ENCODE measurements at regions of chr12 and their contacts with region 1.

Region 1: DNA sequence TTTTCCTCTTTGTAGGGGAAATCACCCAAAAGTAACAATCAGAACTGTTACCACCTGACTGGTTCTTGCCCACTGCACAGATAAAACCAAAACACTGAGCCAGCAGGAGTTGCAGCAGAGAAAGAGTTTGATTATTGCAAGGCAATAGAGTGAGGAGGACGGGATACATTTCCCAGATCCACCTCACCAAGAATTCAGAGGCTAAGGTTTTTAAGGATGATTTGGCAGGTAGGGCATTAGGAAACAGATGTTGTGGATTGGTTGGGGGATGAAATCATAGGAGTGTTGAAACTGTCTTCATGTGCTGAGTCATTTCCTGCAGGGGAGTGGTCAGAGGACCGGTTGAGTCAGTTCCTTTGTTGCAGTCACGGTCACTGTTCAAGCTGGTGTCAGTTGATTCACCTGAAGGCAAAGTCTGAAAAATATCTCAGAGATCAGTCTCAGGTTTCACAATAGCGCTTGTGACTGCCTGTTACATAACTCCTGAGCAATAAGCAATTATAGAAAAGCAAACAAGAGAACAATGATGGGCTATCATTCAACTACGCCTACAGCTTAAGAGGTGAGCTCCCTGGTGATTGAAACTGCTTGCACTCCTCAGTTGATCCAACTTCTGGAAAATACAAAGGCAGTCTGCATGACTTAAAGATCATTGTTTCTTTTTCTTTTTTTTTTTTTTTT is 20.3 kb upstream of the AMN1 start:
- DNase-seq: peak; percentile 67
- ATAC-seq: peak; percentile 70
- H3K4me3 ChIP-seq: peak overlapping the region in 2 of 5 experiments; percentile 1 to 26
- H3K4me3 Mint-ChIP-seq: peak overlapping the region; percentile 79
- H3K27ac ChIP-seq: peak overlapping the region; percentile 50 to 76
- H3K27ac Mint-ChIP-seq: peak overlapping the region; percentile 87
- H3K4me1 ChIP-seq: peaks cover 73 to 76% of the 10 kb centered on the region in 2 donors
- H3K4me1 Mint-ChIP-seq: peaks cover 72% of the 10 kb centered on the region
- H3K27me3 ChIP-seq: no peaks in the 10 kb centered on the region
- H3K27me3 Mint-ChIP-seq: no peaks in the 10 kb centered on the region
- CTCF ChIP-seq: no peak

Region 2: DNA sequence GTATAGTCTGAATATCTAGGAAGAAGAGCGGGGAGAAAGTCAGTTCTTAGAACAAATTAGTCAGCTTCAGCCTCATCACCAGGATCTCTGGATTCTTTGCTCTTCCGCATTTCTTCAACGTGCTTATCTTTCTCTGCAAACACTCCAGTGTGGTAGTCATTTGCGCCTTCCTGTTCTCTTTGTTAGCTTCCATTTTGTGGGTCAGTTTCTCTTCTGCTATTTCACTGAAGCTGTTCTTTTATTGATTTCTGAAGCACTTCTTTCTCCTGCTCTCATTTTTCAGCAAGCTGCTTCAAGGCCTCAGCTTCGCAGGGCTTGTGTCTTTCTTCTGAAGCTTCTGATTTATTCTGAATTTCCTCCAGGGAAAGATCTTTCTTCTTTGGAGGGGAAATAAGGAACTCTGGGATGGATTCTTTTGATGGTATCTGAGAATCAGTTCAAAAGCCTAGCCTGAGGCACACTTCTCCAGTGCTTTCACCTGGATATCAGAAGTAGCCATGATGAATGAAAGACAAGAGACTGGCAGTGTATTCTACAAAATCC is 33.8 kb before region 1 on chr12:
- CTCF ChIA-PET with region 1: no interaction called
- POLR2A ChIA-PET with region 1: interaction called, 6 read pairs
- intact Hi-C with region 1: loop called (anchors 1 kb)
- DNase-seq: peak; percentile 83
- ATAC-seq: peak; percentile 96
- H3K4me3 ChIP-seq: peak overlapping the region; percentile 32 to 60 (median 53)
- H3K4me3 Mint-ChIP-seq: peak overlapping the region; percentile 51
- H3K27ac ChIP-seq: peak overlapping the region; percentile 88 to 90
- H3K27ac Mint-ChIP-seq: peak overlapping the region; percentile 87
- H3K4me1 ChIP-seq: peaks cover 32 to 37% of the 10 kb centered on the region in 2 donors
- H3K4me1 Mint-ChIP-seq: peaks cover 54% of the 10 kb centered on the region
- H3K27me3 ChIP-seq: no peaks in the 10 kb centered on the region
- H3K27me3 Mint-ChIP-seq: no peaks in the 10 kb centered on the region
- CTCF ChIP-seq: no peak

Region 3: DNA sequence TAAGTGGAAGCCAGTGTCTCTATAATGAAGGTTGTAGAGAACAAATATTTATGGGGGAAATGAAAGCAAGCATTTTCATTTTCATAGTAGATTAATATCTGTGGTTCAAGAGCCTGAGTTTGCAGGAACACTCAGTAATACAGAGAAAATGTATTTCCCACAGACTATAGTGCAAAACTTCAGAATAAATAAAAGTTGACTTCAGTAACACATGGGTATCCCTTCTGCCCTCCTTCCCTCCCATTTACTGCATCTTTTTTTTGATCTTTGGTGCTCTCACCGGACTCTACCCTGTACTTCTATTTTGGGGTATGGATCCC is 55.0 kb after region 1 on chr12:
- CTCF ChIA-PET with region 1: interaction called, 4 read pairs
- POLR2A ChIA-PET with region 1: interaction called, 4 read pairs
- intact Hi-C with region 1: loop called (anchors 1 kb)
- DNase-seq: no peak
- ATAC-seq: no peak
- H3K4me3 ChIP-seq: peak overlapping the region in 1 of 5 experiments; percentile 21
- H3K4me3 Mint-ChIP-seq: peak overlapping the region; percentile 85
- H3K27ac ChIP-seq: peak overlapping the region in 1 of 2 donors; percentile 54
- H3K27ac Mint-ChIP-seq: peak overlapping the region; percentile 90
- H3K4me1 ChIP-seq: peaks cover 21 to 43% of the 10 kb centered on the region in 2 donors
- H3K4me1 Mint-ChIP-seq: peaks cover 51% of the 10 kb centered on the region
- H3K27me3 ChIP-seq: no peaks in the 10 kb centered on the region
- H3K27me3 Mint-ChIP-seq: no peaks in the 10 kb centered on the region
- CTCF ChIP-seq: no peak

Region 4: DNA sequence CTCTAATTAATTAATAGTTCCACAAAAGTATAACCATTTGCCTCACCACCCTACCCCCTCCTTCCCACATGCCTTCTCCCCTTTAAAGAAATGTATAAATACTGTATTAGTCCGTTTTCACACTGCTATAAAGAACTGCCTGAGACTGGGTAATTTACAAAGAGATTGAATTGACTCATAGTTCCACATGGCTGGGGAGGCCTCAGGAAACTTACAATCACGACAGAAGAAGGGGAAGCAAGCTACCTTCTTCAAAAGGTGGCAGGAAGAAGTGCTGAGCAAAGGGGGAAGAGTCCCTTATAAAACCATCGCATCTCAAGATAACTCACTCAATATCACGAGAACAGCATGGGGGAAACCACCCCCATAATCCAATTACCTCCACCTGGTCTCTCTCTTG is 201.8 kb after region 1 on chr12:
- CTCF ChIA-PET with region 1: no interaction called
- POLR2A ChIA-PET with region 1: interaction called, 16 read pairs
- intact Hi-C with region 1: no loop called
- DNase-seq: peak; percentile 33
- ATAC-seq: peak; percentile 33
- H3K4me3 ChIP-seq: no peak overlapping the region
- H3K4me3 Mint-ChIP-seq: peak overlapping the region; percentile 39
- H3K27ac ChIP-seq: peak overlapping the region in 1 of 2 donors; percentile 64
- H3K27ac Mint-ChIP-seq: peak overlapping the region; percentile 83
- H3K4me1 ChIP-seq: peaks cover 38 to 39% of the 10 kb centered on the region in 2 donors
- H3K4me1 Mint-ChIP-seq: peaks cover 50% of the 10 kb centered on the region
- H3K27me3 ChIP-seq: no peaks in the 10 kb centered on the region
- H3K27me3 Mint-ChIP-seq: no peaks in the 10 kb centered on the region
- CTCF ChIP-seq: no peak

Region 5: DNA sequence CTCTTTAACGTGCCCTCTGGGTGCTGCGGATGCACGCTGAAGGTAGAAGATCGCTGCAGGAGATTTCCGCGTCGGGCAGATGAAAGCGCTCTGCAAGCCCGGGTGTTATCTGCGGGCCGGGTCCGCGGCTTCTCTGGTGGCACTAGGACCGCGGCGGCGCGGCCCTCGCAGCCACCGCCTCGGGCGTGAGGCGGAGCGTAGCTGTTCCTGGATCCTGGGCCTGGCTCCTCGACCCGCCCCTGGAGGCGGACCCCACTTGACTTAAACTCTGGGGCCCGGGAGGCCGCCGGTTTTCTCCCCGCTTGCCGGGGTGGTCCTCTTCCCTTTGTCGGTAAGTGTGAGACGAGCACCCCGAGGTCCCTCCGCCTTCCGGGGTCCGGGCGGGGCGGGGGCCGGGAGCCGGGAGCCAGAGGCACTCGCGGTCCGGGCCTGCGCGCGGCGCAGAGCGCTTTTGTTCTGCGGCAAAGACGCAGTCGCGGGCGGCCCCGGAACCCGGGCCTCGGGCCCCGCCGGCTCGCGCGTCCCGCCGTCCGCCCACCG is 210.1 kb after region 1 on chr12 and contains the start of gene RESF1:
- CTCF ChIA-PET with region 1: interaction called, 3 read pairs
- POLR2A ChIA-PET with region 1: interaction called, 6 read pairs
- intact Hi-C with region 1: loop called (anchors 2 kb)
- DNase-seq: peak; percentile 91
- ATAC-seq: peak; percentile 85
- H3K4me3 ChIP-seq: peak within 1 kb of the TSS; percentile 65 to 98 (median 70)
- H3K4me3 Mint-ChIP-seq: peak within 1 kb of the TSS; percentile 96
- H3K27ac ChIP-seq: peak within 1 kb of the TSS; percentile 79 to 82
- H3K27ac Mint-ChIP-seq: peak within 1 kb of the TSS; percentile 96
- H3K4me1 ChIP-seq: peaks cover 49 to 50% of the 10 kb centered on the region in 2 donors
- H3K4me1 Mint-ChIP-seq: peaks cover 68% of the 10 kb centered on the region
- H3K27me3 ChIP-seq: no peaks in the 10 kb centered on the region
- H3K27me3 Mint-ChIP-seq: no peaks in the 10 kb centered on the region
- CTCF ChIP-seq: no peak
- total RNA-seq, gene RESF1: 350 and 352 TPM in 2 replicates

Measured in B cell (primary cell).